Activated CD4-positive, alpha-beta T cell treated with anti-CD3 and anti-CD28 coated beads, Interleukin-2, amount 10 ng/mL, durations not matched to agents 24 days and 14 days (primary cell): ENCODE measurements at regions of chr18 and their contacts with region 1.

Region 1: DNA sequence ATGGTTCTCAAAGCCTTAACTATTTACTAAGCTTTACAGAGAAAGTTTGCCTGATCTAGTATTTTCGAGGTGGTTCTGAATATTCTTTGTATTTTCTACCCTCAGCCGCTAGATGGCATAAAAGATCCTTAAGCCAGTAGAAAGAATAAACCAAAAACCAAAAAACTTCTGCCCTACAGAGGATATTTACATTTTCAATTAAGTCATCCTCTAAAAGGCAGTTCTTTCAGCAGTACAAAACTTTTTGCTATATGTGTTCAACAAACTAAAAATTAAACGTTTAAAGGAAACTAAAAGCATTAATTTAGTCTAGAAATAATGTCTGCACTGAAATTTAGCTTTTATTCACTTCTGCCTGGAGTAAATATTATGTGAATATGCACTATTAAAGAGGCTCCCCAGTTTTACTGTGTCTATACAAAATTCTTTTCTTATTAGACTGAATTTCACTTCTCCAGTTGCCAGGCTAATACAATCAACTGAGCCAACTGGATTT is 297.5 kb downstream of the PIEZO2 start:
- DNase-seq: no peak
- H3K4me3 Mint-ChIP-seq: no peak overlapping the region
- H3K27ac Mint-ChIP-seq: no peak overlapping the region
- H3K4me1 Mint-ChIP-seq: no peaks in the 10 kb centered on the region
- H3K27me3 Mint-ChIP-seq: peaks cover 4% of the 10 kb centered on the region

Region 2: DNA sequence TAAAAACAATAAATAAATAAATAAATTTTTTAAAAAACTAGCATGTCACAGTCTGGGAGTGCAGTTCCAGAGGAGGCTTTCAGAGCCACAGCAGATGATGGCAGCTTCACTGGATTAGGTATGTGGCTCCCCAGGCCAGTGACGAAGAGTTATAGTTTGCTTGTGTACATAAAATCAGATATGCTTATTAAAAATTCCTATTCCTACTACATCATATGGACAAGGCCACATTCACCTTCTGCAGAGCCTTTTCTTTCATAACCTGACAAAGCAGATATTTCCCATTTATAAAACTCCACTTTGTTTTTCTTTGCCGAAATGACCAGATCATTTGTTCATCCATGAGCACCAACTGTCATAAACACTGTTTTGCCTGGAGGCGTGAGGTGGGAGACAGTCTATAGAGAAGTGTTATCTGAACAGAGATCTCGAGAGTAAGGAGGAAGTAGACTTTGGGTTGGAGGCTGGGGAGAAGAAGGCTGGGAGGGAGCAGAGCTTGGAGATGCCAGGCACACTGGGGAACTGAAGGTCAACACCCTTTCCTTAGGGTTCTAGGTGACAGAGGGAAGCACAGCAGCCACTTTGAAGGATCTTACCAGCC is 156.9 kb before region 1 on chr18:
- intact Hi-C with region 1: no loop called
- DNase-seq: no peak
- H3K4me3 Mint-ChIP-seq: no peak overlapping the region
- H3K27ac Mint-ChIP-seq: no peak overlapping the region
- H3K4me1 Mint-ChIP-seq: no peaks in the 10 kb centered on the region
- H3K27me3 Mint-ChIP-seq: no peaks in the 10 kb centered on the region

Region 3: GRCh38 chr18:10787293-10787901 is 64.5 kb before region 1 on chr18:
- intact Hi-C with region 1: no loop called
- DNase-seq: peak; percentile 96
- H3K4me3 Mint-ChIP-seq: no peak overlapping the region
- H3K27ac Mint-ChIP-seq: no peak overlapping the region
- H3K4me1 Mint-ChIP-seq: peaks cover 5% of the 10 kb centered on the region
- H3K27me3 Mint-ChIP-seq: peaks cover 55% of the 10 kb centered on the region

Region 4: DNA sequence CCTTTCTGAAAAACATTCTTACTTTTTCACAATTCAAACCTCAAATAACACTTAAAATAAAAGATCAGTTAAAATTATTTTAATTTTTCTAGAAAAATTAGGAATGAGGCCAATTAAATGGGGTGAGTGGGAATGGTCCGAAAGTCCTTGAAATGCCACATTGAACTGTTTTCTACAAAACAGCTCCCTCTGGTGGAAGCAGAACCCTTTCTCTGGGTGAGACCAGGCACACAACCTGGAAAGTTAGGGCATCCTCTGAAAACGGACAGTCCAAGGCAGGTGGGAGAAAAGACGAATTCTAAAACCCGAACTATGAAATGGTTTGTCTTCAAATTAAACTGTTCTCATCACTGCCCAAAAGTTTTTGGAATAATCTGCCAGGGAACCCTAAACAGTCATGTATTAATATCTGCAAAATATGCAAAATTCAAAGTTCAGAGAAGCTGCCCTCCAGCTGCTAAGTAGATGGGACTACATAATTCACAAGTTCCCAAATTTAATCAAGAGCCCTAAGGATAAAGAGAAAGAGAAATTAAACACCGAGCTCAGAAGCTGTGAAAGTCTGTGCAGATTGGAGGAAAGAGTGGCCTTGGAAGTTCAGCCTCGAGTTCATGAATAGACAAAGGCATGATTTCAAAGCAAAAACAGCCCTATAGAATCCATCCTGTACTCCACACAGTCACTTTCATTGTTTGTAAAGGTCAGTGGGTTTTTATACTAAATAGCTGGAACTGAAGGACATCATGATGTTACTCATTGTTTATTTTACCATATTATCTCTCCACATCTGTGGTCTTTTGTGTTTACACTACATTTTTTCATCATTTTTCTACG is 189.2 kb after region 1 on chr18:
- intact Hi-C with region 1: loop called (anchors 1 kb)
- DNase-seq: peak; percentile 80
- H3K4me3 Mint-ChIP-seq: no peak overlapping the region
- H3K27ac Mint-ChIP-seq: no peak overlapping the region
- H3K4me1 Mint-ChIP-seq: no peaks in the 10 kb centered on the region
- H3K27me3 Mint-ChIP-seq: peaks cover 16% of the 10 kb centered on the region

Region 5: DNA sequence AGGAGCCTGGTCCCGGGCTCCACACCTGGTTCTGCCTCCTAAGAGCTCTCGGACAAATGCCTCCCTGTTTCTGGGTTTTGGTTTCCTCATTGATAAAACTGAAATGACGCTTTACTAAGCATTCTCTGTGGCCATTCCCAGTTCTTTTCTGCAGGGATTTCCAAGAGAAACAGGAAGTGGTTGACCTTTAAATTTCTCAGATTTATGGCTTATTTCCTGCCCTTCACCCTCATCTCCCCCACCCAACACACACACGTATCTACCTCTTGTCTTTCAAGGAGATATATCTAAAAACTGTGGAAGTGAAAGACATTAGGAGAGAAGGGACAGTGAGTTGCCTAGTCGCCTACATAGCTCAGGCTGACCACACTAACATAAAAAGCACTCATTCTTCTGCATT is 244.5 kb after region 1 on chr18:
- intact Hi-C with region 1: no loop called
- DNase-seq: no peak
- H3K4me3 Mint-ChIP-seq: no peak overlapping the region
- H3K27ac Mint-ChIP-seq: no peak overlapping the region
- H3K4me1 Mint-ChIP-seq: no peaks in the 10 kb centered on the region
- H3K27me3 Mint-ChIP-seq: no peaks in the 10 kb centered on the region

Region 6: DNA sequence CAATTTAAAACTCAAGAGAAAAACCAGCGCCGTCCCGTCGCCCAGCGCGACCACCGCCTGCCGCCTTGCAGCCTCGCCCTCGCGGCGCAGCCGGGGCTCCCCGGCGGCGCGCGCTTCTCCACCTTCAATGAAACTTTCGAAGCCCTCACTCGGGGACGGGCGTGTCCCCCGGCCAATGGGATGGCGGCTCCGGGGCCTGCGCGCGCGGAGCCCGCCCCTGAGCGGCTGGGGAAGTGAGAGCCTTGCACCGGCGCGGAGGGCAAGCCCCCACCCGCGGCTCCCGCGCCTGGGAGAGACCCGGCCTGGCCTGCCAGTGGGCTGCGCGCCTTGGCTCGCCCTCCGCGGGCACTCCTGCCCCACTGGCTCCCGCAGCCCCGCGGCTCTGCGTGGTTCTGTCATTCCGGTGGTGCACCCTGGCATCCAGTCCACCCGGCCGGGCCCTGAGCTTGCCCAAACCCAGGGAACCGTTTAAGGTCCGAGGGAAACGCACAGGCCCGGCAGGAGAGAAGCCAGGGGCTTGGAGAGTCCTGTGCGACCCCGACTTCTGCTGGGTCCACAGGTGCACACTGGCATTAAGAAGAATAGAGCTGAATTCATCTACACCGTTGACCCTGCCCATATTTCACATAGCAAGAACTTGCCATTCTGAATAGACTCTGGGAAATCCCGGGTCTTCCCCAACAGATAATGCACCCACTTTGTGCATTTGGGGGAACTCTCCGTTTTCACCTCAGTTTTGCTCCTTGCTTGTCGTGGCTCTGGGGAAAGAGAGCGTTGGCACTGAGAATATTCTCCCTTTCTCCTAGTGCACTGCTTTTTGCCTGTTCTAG is 297.8 kb after region 1 on chr18 and contains the start of gene PIEZO2:
- intact Hi-C with region 1: loop called (anchors 5 kb)
- DNase-seq: peak; percentile 56
- H3K4me3 Mint-ChIP-seq: no peak within 1 kb of the TSS
- H3K27ac Mint-ChIP-seq: no peak within 1 kb of the TSS
- H3K4me1 Mint-ChIP-seq: peaks cover 2% of the 10 kb centered on the region
- H3K27me3 Mint-ChIP-seq: peaks cover 39% of the 10 kb centered on the region
- total RNA-seq, gene PIEZO2: not detected in 2 replicates

Region 7: DNA sequence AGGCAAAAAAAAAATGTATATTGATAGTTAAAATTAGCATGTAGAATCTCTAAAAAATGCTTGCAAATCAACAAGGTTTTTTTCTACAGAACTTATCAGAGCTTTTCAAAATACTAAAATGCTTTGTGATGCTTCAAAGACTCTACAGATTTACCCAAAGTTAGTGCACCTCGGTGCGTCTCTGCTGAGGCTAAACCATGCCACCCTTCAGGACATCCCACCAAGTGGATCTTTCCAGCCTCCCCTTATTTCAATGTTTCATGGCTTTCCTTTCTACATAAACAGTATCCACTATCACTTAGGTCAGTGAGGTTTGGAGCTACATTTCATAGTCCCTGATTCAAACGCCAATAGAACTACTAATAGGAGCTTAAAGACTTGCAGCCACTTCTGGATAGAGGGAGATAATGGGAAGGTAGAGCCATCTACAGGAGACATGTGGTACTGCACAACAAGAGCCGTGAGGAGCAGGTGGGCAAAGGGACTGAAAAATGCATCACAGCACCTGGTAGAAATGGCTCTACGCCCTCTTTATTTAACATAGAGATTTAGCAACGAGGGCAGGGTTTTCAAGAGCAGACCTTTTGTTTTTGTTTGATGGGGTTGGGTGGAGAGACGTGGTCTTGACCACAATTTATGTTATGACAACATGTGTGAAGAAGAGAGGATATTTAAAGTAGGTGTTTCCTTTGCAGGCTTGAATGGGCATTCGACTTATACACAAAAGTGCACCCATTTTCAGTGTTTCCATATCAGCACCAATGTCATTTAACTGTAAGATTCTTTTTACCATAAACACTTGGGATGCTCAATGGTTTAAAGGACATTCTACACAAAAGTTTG is 701.4 kb after region 1 on chr18:
- intact Hi-C with region 1: loop called (anchors 5 kb)
- DNase-seq: peak; percentile 80
- H3K4me3 Mint-ChIP-seq: no peak overlapping the region
- H3K27ac Mint-ChIP-seq: no peak overlapping the region
- H3K4me1 Mint-ChIP-seq: no peaks in the 10 kb centered on the region
- H3K27me3 Mint-ChIP-seq: peaks cover 2% of the 10 kb centered on the region